ENCODE measurements at regions of chr17 and their contacts with region 1.

Region 1: GRCh38 chr17:32461853-32462617 is 17.7 kb downstream of the PSMD11 start:
- DNase-seq: peak; percentile 45
- H3K4me3 Mint-ChIP-seq: no peak overlapping the region
- H3K27ac Mint-ChIP-seq: no peak overlapping the region
- H3K4me1 Mint-ChIP-seq: peaks cover 27% of the 10 kb centered on the region
- H3K27me3 Mint-ChIP-seq: no peaks in the 10 kb centered on the region

Region 2: GRCh38 chr17:32444308-32445073 is 17.5 kb before region 1 on chr17 and contains the start of gene PSMD11:
- intact Hi-C with region 1: loop called (anchors 1 kb)
- DNase-seq: peak; percentile 98
- H3K4me3 Mint-ChIP-seq: peak within 1 kb of the TSS; percentile 94
- H3K27ac Mint-ChIP-seq: peak within 1 kb of the TSS; percentile 88
- H3K4me1 Mint-ChIP-seq: peaks cover 28% of the 10 kb centered on the region
- H3K27me3 Mint-ChIP-seq: peaks cover 5% of the 10 kb centered on the region
- total RNA-seq, gene PSMD11: 190 and 198 TPM in 2 replicates

Region 3: GRCh38 chr17:32515677-32516383 is 53.8 kb after region 1 on chr17:
- intact Hi-C with region 1: no loop called
- DNase-seq: no peak
- H3K4me3 Mint-ChIP-seq: no peak overlapping the region
- H3K27ac Mint-ChIP-seq: no peak overlapping the region
- H3K4me1 Mint-ChIP-seq: peaks cover 60% of the 10 kb centered on the region
- H3K27me3 Mint-ChIP-seq: peaks cover 12% of the 10 kb centered on the region

Region 4: DNA sequence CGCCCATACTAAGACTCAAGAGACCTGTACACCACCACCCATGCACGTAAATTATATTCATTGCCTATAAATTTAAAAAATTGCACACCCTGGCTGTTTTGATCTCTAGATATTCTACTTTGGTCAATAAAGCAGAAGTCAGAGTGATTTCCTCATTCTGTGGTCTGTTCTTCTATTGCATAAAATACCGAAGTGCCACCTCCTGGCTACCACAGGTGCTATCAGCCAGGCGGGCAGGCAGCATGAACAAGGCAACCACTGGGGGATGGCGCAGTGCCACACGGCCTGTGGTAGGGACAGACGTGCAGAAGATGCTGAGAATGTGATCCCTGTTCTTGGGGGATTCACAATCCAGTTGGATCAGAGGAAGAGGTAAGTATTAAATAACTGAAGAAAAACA is 147.1 kb after region 1 on chr17:
- intact Hi-C with region 1: loop called (anchors 1 kb)
- DNase-seq: peak; percentile 37
- H3K4me3 Mint-ChIP-seq: no peak overlapping the region
- H3K27ac Mint-ChIP-seq: no peak overlapping the region
- H3K4me1 Mint-ChIP-seq: peaks cover 7% of the 10 kb centered on the region
- H3K27me3 Mint-ChIP-seq: peaks cover 5% of the 10 kb centered on the region

Region 5: DNA sequence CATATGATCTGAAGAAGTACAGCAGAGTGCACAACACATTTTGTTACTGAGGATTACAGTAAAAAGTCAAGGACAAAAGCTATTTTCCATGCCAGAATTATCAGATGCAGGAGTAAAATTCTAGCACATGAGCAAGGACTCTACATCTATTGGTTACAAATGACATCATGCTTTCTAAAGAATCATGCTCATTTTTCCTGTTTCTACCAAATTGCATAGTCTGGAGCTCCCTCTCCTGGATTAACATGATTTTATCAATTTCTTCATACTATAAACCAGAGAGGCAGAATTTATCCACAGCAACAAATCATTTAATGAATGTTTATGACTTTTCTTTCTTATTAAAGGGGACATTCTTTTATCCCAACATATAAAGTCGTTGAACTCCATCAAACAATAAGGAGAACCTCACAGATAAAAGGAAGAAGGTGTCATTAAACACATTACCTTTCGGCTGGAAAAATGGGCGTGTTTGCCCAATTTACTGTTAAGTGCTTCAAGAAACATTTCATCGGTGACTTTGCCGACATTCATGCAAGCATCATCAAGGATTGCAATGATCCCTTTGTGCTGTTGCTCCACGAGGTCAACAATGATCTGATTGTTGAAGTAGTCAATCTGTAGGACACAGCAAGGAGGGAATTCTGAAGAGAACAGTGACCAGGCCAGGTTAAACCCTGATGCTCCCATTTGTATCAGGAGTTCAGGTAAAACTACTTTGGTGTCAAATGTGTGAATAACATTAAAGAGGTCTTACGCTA is 293.2 kb after region 1 on chr17:
- intact Hi-C with region 1: loop called (anchors 1 kb)
- DNase-seq: no peak
- H3K4me3 Mint-ChIP-seq: no peak overlapping the region
- H3K27ac Mint-ChIP-seq: no peak overlapping the region
- H3K4me1 Mint-ChIP-seq: peaks cover 5% of the 10 kb centered on the region
- H3K27me3 Mint-ChIP-seq: peaks cover 3% of the 10 kb centered on the region

Measured in activated T-helper 1 cell treated with anti-CD3 and anti-CD28 coated beads, Interleukin-12 subunit alpha, Interleukin-12 subunit beta, Interleukin-2, Interleukin-4 antibody, amounts not matched to agents 30 ng/mL and 10 ng/mL and 1 ng/mL, durations not matched to agents 14 hours and 24 hours and 36 hours (primary cell).